ENCODE measurements at regions of chr10 and their contacts with region 1.

Region 1: GRCh38 chr10:69408318-69409175 is 8.2 kb downstream of the TACR2 start:
- DNase-seq: peak; percentile 77 to 97 (median 89)
- ATAC-seq: peak; percentile 88
- H3K4me3 ChIP-seq: peak overlapping the region; percentile 37 to 49
- H3K4me3 Mint-ChIP-seq: peak overlapping the region; percentile 49
- H3K27ac ChIP-seq: peak overlapping the region; percentile 72 to 75
- H3K27ac Mint-ChIP-seq: peak overlapping the region; percentile 94
- H3K4me1 ChIP-seq: peaks cover 18% of the 10 kb centered on the region
- H3K4me1 Mint-ChIP-seq: peaks cover 20% of the 10 kb centered on the region
- H3K27me3 ChIP-seq: no peaks in the 10 kb centered on the region
- H3K27me3 Mint-ChIP-seq: no peaks in the 10 kb centered on the region
- CTCF ChIP-seq: peak; percentile 72

Region 2: DNA sequence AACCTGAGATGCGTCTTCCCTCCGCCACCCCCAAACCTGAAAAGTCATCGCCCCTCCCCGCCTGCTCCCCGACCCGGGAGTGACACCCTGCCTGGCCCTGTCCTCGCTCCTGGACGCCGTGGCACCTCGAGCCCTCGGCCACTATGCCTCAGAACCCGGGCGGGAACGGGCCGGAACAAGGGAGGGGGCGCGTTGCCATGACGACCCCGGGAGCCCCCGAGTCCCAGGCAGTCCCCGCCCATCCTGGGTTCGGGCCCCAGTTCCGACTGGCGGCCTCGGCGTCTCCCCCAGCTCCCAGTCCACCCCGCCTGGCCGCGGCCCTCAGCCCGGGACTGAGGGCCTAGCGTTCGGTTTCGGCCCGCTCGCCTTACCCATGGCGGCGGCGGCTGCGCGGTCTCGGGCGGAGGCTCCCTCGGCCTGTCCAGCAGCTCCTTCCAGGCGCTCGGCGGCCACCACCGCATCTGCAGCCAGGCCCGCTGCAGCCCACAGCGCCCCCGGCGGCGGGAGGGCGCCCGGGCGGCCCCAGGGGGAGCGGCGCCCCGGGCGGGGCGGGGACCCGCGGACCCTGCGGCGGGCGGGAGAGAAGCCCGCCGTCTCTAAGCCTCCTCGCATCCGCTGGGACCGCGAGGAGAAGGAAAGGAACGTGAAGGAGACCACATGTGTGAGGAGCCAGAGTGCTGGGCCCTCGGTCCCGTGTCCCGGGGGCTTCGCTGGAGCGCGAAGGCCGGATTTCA is 1001.6 kb before region 1 on chr10 and contains the start of gene RUFY2:
- CTCF ChIA-PET with region 1: no interaction called
- POLR2A ChIA-PET with region 1: no interaction called
- intact Hi-C with region 1: loop called in 1 of 2 experiments (anchors 10 kb)
- DNase-seq: peak; percentile 56 to 89 (median 76)
- ATAC-seq: peak; percentile 92
- H3K4me3 ChIP-seq: peak within 1 kb of the TSS; percentile 95 to 99
- H3K4me3 Mint-ChIP-seq: peak within 1 kb of the TSS; percentile 92
- H3K27ac ChIP-seq: peak within 1 kb of the TSS; percentile 69 to 78
- H3K27ac Mint-ChIP-seq: peak within 1 kb of the TSS; percentile 82
- H3K4me1 ChIP-seq: peaks cover 10% of the 10 kb centered on the region
- H3K4me1 Mint-ChIP-seq: peaks cover 19% of the 10 kb centered on the region
- H3K27me3 ChIP-seq: no peaks in the 10 kb centered on the region
- H3K27me3 Mint-ChIP-seq: no peaks in the 10 kb centered on the region
- CTCF ChIP-seq: peak; percentile 81
- total RNA-seq, gene RUFY2: 11.7 to 13.7 TPM

Region 3: GRCh38 chr10:69237528-69238159 is 170.9 kb before region 1 on chr10:
- CTCF ChIA-PET with region 1: interaction called, 51 read pairs
- POLR2A ChIA-PET with region 1: no interaction called
- intact Hi-C with region 1: loop called in 1 of 2 experiments (anchors 1 kb)
- DNase-seq: peak; percentile 76 to 94 (median 85)
- ATAC-seq: peak; percentile 97
- H3K4me3 ChIP-seq: no peak overlapping the region
- H3K4me3 Mint-ChIP-seq: no peak overlapping the region
- H3K27ac ChIP-seq: no peak overlapping the region
- H3K27ac Mint-ChIP-seq: no peak overlapping the region
- H3K4me1 ChIP-seq: peaks cover 23% of the 10 kb centered on the region
- H3K4me1 Mint-ChIP-seq: peaks cover 19% of the 10 kb centered on the region
- H3K27me3 ChIP-seq: no peaks in the 10 kb centered on the region
- H3K27me3 Mint-ChIP-seq: no peaks in the 10 kb centered on the region
- CTCF ChIP-seq: peak; percentile 94

Region 4: DNA sequence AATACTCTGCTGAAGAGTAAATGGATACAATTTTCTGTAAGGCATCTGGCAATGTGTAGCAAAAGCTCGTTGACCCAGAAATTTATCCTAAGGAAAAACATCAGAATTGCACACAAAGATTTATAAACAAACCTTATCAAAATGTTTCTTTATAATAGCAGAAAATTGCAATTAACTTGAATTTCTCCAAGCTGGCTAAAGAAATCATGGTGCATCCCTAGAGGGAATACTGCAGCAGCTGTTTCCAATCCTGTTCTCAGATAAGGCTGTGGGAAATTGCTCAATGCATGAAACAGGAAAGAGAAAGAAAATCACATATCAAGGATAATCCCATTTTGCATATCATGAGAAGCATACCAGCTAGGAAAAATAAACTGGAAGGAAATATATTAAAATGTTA is 10.6 kb before region 1 on chr10:
- CTCF ChIA-PET with region 1: interaction called, 21 read pairs
- POLR2A ChIA-PET with region 1: interaction called, 5 read pairs
- intact Hi-C with region 1: no loop called
- DNase-seq: no peak
- ATAC-seq: no peak
- H3K4me3 ChIP-seq: no peak overlapping the region
- H3K4me3 Mint-ChIP-seq: no peak overlapping the region
- H3K27ac ChIP-seq: no peak overlapping the region
- H3K27ac Mint-ChIP-seq: no peak overlapping the region
- H3K4me1 ChIP-seq: no peaks in the 10 kb centered on the region
- H3K4me1 Mint-ChIP-seq: no peaks in the 10 kb centered on the region
- H3K27me3 ChIP-seq: no peaks in the 10 kb centered on the region
- H3K27me3 Mint-ChIP-seq: no peaks in the 10 kb centered on the region
- CTCF ChIP-seq: no peak

Region 5: DNA sequence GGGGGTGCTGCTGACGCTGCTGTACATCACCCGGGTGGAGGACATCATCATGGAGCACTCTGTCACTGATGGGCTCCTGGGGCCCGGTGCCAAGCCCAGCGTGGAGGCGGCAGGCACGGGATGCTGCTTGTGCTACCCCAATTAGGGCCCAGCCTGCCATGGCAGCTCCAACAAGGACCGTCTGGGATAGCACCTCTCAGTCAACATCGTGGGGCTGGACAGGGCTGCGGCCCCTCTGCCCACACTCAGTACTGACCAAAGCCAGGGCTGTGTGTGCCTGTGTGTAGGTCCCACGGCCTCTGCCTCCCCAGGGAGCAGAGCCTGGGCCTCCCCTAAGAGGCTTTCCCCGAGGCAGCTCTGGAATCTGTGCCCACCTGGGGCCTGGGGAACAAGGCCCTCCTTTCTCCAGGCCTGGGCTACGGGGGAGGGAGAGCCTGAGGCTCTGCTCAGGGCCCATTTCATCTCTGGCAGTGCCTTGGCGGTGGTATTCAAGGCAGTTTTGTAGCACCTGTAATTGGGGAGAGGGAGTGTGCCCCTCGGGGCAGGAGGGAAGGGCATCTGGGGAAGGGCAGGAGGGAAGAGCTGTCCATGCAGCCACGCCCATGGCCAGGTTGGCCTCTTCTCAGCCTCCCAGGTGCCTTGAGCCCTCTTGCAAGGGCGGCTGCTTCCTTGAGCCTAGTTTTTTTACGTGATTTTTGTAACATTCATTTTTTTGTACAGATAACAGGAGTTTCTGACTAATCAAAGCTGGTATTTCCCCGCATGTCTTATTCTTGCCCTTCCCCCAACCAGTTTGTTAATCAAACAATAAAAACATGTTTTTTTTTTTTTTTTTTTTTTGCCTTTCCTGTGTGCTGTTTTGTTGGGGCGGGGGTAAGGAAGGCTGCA is 98.5 kb after region 1 on chr10:
- CTCF ChIA-PET with region 1: interaction called, 42 read pairs
- POLR2A ChIA-PET with region 1: interaction called, 3 read pairs
- intact Hi-C with region 1: loop called (anchors 1 kb)
- DNase-seq: peak in 1 of 9 experiments; percentile 48
- ATAC-seq: peak; percentile 6
- H3K4me3 ChIP-seq: peak overlapping the region in 1 of 2 experiments; percentile 10
- H3K4me3 Mint-ChIP-seq: peak overlapping the region; percentile 71
- H3K27ac ChIP-seq: no peak overlapping the region
- H3K27ac Mint-ChIP-seq: peak overlapping the region; percentile 62
- H3K4me1 ChIP-seq: peaks cover 4% of the 10 kb centered on the region
- H3K4me1 Mint-ChIP-seq: peaks cover 10% of the 10 kb centered on the region
- H3K27me3 ChIP-seq: no peaks in the 10 kb centered on the region
- H3K27me3 Mint-ChIP-seq: no peaks in the 10 kb centered on the region
- CTCF ChIP-seq: no peak

Region 6: GRCh38 chr10:69620625-69621024 is 212.1 kb after region 1 on chr10:
- CTCF ChIA-PET with region 1: no interaction called
- POLR2A ChIA-PET with region 1: no interaction called
- intact Hi-C with region 1: no loop called
- DNase-seq: no peak
- ATAC-seq: no peak
- H3K4me3 ChIP-seq: no peak overlapping the region
- H3K4me3 Mint-ChIP-seq: no peak overlapping the region
- H3K27ac ChIP-seq: no peak overlapping the region
- H3K27ac Mint-ChIP-seq: no peak overlapping the region
- H3K4me1 ChIP-seq: peaks cover 26% of the 10 kb centered on the region
- H3K4me1 Mint-ChIP-seq: peaks cover 44% of the 10 kb centered on the region
- H3K27me3 ChIP-seq: no peaks in the 10 kb centered on the region
- H3K27me3 Mint-ChIP-seq: no peaks in the 10 kb centered on the region
- CTCF ChIP-seq: no peak

Region 7: DNA sequence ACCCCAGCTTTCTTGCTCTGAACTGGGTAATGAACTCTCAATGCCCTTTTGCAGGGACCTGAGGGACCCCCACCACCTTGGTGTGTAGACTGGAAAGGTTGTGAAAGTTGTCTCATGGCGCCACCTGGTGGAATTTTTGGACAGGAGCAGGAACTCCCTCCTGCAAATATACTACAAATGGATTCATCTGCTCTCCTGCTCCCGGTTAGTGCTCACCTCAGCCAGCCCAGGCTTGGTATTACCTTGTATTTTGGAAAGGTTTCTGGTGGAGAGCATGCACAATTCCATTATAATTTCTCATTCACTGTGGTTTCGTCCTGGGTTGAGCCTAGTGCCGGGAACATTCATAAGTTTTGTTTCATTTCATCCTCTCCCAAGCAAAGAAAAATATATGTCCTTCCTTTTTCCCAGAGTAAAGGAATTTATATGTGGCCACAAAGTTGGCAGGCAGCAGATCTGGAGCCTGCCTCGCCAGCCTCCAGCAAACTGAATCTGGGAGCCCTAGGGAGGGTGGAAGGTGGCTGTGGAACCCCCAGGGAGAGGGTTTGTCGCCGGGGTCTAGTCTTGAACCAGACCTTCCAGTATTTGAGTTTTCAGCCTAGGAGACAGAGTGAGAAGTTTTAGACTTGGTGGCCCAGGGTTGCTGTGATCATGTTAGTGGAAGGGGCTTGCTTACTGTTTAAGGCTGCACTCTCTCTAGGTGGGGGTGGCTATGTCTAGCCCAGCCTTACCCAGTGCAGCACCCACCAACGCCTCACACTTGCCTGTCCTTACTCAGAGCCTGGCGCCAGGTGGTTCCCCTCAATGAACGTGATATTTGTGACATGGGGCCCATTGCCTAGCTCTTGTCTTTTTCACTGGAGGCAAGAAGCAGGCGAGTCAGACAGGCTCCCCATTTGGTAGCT is 231.0 kb after region 1 on chr10:
- CTCF ChIA-PET with region 1: interaction called, 10 read pairs
- POLR2A ChIA-PET with region 1: no interaction called
- intact Hi-C with region 1: loop called in 1 of 2 experiments (anchors 2 kb)
- DNase-seq: peak; percentile 43 to 83 (median 71)
- ATAC-seq: peak; percentile 76
- H3K4me3 ChIP-seq: no peak overlapping the region
- H3K4me3 Mint-ChIP-seq: no peak overlapping the region
- H3K27ac ChIP-seq: no peak overlapping the region
- H3K27ac Mint-ChIP-seq: no peak overlapping the region
- H3K4me1 ChIP-seq: no peaks in the 10 kb centered on the region
- H3K4me1 Mint-ChIP-seq: no peaks in the 10 kb centered on the region
- H3K27me3 ChIP-seq: peaks cover 0 to 2% of the 10 kb centered on the region in 2 experiments
- H3K27me3 Mint-ChIP-seq: peaks cover 7% of the 10 kb centered on the region
- CTCF ChIP-seq: peak; percentile 86